Adrenal gland (tissue), 19 donors: ENCODE measurements at regions of chr20 and their contacts with region 1.

Region 1: DNA sequence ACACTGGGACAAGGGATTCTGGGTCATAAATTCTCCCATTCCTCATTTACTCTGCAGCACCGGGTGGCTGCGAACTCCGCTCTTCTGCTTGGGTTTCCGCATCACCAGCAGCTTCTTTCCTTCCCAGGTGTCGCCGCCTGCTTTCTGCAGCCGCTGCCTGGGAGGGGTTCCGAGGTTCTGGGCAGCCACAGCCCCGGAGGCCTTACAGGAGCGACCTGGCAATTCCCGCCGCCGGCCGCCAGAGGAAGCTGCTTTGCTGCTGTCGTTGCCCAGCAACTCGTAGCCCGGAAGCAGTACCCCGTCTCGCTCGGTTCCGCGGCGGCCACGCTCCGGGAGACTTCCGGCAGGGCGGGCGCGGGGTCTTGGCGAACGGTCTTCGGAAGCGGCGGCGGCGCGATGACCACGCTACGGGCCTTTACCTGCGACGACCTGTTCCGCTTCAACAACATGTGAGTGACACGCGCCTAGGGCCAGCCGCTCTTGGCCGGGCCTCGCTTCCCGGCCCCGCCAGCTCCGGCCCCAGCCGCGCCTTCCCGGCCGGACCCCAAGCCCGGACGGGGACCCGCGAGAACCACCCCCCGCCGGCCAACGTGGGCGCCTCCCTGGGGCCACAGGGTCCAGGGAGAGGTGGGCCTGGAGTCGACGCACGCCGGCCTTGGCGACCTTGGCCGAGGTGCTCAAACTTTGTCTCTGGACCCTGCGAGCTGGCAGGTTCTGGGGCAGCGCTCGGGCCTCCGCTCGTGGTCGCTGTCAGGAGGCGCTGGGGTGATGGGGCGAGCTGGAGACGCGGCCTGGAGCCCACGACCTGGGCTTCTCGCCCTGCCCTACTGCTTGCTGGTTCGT is at the start of gene NAA20:
- DNase-seq: peak; percentile 92 to 97 (median 95)
- H3K4me3 ChIP-seq: peak within 1 kb of the TSS; percentile 78 to 97 (median 90)
- H3K27ac ChIP-seq: peak within 1 kb of the TSS in 4 of 5 donors; percentile 59 to 77 (median 66)
- H3K4me1 ChIP-seq: peaks cover 5 to 34% of the 10 kb centered on the region in 2 donors
- H3K27me3 ChIP-seq: no peaks in the 10 kb centered on the region
- CTCF ChIP-seq: peak; percentile 64 to 95 (median 84)
- POLR2A ChIP-seq: peak in 1 of 2 donors; percentile 53
- total RNA-seq, gene NAA20: 19.4 to 75.7 (median 56.3) TPM

Region 2: GRCh38 chr20:20052074-20052970 is 35.1 kb after region 1 on chr20 and contains the starts of genes CFAP61 and CRNKL1:
- intact Hi-C with region 1: loop called in 1 of 2 experiments (anchors 5 kb)
- DNase-seq: peak; percentile 97 to 99 (median 98)
- H3K4me3 ChIP-seq: peak within 1 kb of the TSS; percentile 76 to 98 (median 86)
- H3K27ac ChIP-seq: peak within 1 kb of the TSS; percentile 77 to 86 (median 82)
- H3K4me1 ChIP-seq: peaks cover 7 to 19% of the 10 kb centered on the region in 2 donors
- H3K27me3 ChIP-seq: no peaks in the 10 kb centered on the region
- CTCF ChIP-seq: peak in 3 of 6 experiments; percentile 14 to 45 (median 32)
- POLR2A ChIP-seq: peak in 1 of 2 donors; percentile 48
- total RNA-seq, gene CFAP61: 0.53 to 3.6 (median 0.91) TPM in 6 of 9 donors, not detected in the others
- total RNA-seq, gene CRNKL1: 9.6 to 32.0 (median 18.5) TPM

Region 3: DNA sequence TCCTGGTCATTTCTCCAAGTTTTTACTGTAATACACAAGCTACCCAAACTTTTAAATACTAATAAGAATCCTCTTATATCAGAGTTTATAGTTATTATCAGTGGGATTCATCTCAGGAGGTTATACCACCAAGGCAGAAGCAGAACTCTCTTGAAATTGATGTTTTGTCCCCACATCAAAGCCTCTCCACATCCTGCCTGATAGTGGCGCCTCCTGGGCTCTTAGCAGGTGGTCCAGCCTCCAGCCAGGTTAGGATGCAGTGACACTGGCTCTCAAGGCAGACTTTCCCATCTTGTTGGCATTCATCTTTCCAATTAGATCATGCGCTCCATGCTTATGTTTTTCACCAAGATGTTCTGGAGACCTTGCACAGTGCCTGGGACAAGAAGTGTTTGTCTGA is 268.8 kb after region 1 on chr20:
- intact Hi-C with region 1: no loop called
- DNase-seq: no peak
- H3K4me3 ChIP-seq: no peak overlapping the region
- H3K27ac ChIP-seq: no peak overlapping the region
- H3K4me1 ChIP-seq: no peaks in the 10 kb centered on the region
- H3K27me3 ChIP-seq: no peaks in the 10 kb centered on the region
- CTCF ChIP-seq: no peak
- POLR2A ChIP-seq: no peak